IMR-90 (cell line): ENCODE measurements at regions of chr2 and their contacts with region 1.

Region 1: GRCh38 chr2:238370823-238371372 is 50.6 kb downstream of the TRAF3IP1 start:
- DNase-seq: peak; percentile 67
- ATAC-seq: peak; percentile 98
- H3K4me3 ChIP-seq: no peak overlapping the region
- H3K27ac ChIP-seq: no peak overlapping the region
- H3K4me1 ChIP-seq: no peaks in the 10 kb centered on the region
- H3K27me3 ChIP-seq: no peaks in the 10 kb centered on the region
- CTCF ChIP-seq: peak; percentile 96
- POLR2A ChIP-seq: peak; percentile 42; the same call in 1 of the 2 replicates
- RAD21 ChIP-seq: peak; percentile 97

Region 2: GRCh38 chr2:238528953-238529781 is 158.3 kb after region 1 on chr2:
- CTCF ChIA-PET with region 1: no interaction called
- POLR2A ChIA-PET with region 1: no interaction called
- dilution Hi-C with region 1: no loop called
- in situ Hi-C with region 1: no loop called
- intact Hi-C with region 1: loop called (anchors 2 kb)
- DNase-seq: peak; percentile 82
- ATAC-seq: peak; percentile 95
- H3K4me3 ChIP-seq: no peak overlapping the region
- H3K27ac ChIP-seq: no peak overlapping the region
- H3K4me1 ChIP-seq: no peaks in the 10 kb centered on the region; the same call in 1 of the 2 replicates
- H3K27me3 ChIP-seq: peaks cover 2% of the 10 kb centered on the region; the same call in 1 of the 2 replicates
- CTCF ChIP-seq: no peak
- POLR2A ChIP-seq: no peak
- RAD21 ChIP-seq: 0 out of 2 replicates have a peak, but pooled peaks have one; percentile 30

Region 3: DNA sequence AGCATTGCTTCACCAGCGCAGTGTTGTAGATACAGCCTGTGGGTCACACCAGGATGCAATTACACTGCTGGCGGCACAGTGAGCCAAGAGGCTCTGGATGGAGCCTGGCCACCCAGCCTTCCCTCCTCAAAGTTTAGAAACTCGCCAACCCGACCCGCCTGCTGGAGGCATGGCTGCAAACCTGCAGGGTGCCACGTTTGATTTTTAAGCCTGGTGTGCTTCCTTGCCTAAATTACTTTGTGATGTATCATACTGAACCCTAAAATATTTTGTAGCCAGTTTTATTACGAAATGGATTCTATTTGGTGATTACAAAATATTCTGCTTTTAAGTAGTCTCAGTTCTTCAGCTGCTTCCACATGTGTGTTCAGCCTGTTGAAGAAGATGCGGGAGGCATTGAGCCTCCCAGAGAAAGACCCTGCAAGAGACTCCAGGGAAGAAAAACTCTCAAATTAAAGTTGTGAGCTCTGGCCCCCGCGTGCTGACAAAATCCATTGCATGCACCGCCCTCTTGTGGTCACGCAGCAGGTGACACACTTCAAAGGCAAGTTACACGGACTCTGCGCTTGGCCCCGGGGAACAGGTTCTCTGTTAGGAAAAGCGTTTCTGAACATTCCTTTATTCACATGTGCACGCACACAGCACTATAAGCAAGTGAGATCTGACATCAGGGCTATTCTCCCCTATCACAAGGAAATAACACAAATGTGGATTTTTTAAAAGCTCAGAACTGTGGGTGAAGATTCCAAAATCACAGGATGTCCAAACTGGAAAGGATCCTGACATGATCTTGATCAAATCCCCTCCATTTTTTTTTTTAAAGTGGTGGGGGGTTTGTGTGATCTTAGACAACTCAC is 414.0 kb after region 1 on chr2:
- CTCF ChIA-PET with region 1: no interaction called
- POLR2A ChIA-PET with region 1: no interaction called
- dilution Hi-C with region 1: no loop called
- in situ Hi-C with region 1: loop called (anchors 10 kb)
- intact Hi-C with region 1: loop called (anchors 1 kb)
- DNase-seq: peak; percentile 61
- ATAC-seq: peak; percentile 88
- H3K4me3 ChIP-seq: no peak overlapping the region
- H3K27ac ChIP-seq: no peak overlapping the region
- H3K4me1 ChIP-seq: no peaks in the 10 kb centered on the region; the same call in 1 of the 2 replicates
- H3K27me3 ChIP-seq: peaks cover 2% of the 10 kb centered on the region
- CTCF ChIP-seq: peak; percentile 89
- POLR2A ChIP-seq: no peak
- RAD21 ChIP-seq: peak; percentile 89

Region 4: GRCh38 chr2:238970553-238971081 is 599.7 kb after region 1 on chr2:
- CTCF ChIA-PET with region 1: no interaction called
- POLR2A ChIA-PET with region 1: no interaction called
- dilution Hi-C with region 1: no loop called
- in situ Hi-C with region 1: loop called (anchors 25 kb)
- intact Hi-C with region 1: no loop called
- DNase-seq: peak; percentile 63
- ATAC-seq: peak; percentile 90
- H3K4me3 ChIP-seq: no peak overlapping the region
- H3K27ac ChIP-seq: no peak overlapping the region
- H3K4me1 ChIP-seq: peaks cover 10% of the 10 kb centered on the region
- H3K27me3 ChIP-seq: no peaks in the 10 kb centered on the region; the same call in 1 of the 2 replicates
- CTCF ChIP-seq: peak; percentile 95
- POLR2A ChIP-seq: no peak
- RAD21 ChIP-seq: peak; percentile 80